Calu3 (cell line): ENCODE measurements at regions of chr1 and their contacts with region 1.

Region 1: GRCh38 chr1:80542231-80542630 is 1258.5 kb upstream of the ADGRL2 start:
- DNase-seq: no peak
- H3K4me3 Mint-ChIP-seq: no peak overlapping the region
- H3K27ac Mint-ChIP-seq: no peak overlapping the region
- H3K4me1 Mint-ChIP-seq: peaks cover 30% of the 10 kb centered on the region
- H3K27me3 Mint-ChIP-seq: no peaks in the 10 kb centered on the region
- CTCF ChIP-seq: no peak

Region 2: GRCh38 chr1:80248886-80249285 is 293.3 kb before region 1 on chr1:
- CTCF ChIA-PET with region 1: no interaction called
- intact Hi-C with region 1: no loop called
- DNase-seq: no peak
- H3K4me3 Mint-ChIP-seq: no peak overlapping the region
- H3K27ac Mint-ChIP-seq: no peak overlapping the region
- H3K4me1 Mint-ChIP-seq: no peaks in the 10 kb centered on the region
- H3K27me3 Mint-ChIP-seq: no peaks in the 10 kb centered on the region
- CTCF ChIP-seq: no peak

Region 3: DNA sequence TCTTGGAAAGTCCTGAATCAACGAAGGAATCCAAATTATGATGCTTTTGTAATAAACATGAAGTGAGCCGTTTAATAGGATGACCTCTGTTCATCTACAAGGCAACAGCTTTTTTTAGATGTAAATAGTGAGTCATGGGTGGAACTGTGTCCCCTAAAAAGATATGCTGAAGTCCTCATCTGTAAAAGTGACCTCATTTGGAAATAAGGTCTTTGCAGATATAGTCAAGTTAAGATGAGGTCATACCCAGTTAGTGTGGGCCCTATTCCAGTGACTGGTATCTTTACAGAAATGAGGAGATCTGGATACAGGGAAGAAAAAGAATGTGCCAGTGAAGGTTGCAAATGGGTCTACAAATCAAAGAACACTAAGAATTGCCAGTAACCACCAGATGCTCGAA is 248.4 kb before region 1 on chr1:
- CTCF ChIA-PET with region 1: no interaction called
- intact Hi-C with region 1: no loop called
- DNase-seq: no peak
- H3K4me3 Mint-ChIP-seq: no peak overlapping the region
- H3K27ac Mint-ChIP-seq: no peak overlapping the region
- H3K4me1 Mint-ChIP-seq: no peaks in the 10 kb centered on the region
- H3K27me3 Mint-ChIP-seq: no peaks in the 10 kb centered on the region
- CTCF ChIP-seq: no peak

Region 4: GRCh38 chr1:80531182-80531581 is 11.0 kb before region 1 on chr1:
- CTCF ChIA-PET with region 1: no interaction called
- intact Hi-C with region 1: no loop called
- DNase-seq: no peak
- H3K4me3 Mint-ChIP-seq: no peak overlapping the region
- H3K27ac Mint-ChIP-seq: no peak overlapping the region
- H3K4me1 Mint-ChIP-seq: peaks cover 32% of the 10 kb centered on the region
- H3K27me3 Mint-ChIP-seq: no peaks in the 10 kb centered on the region
- CTCF ChIP-seq: no peak

Region 5: DNA sequence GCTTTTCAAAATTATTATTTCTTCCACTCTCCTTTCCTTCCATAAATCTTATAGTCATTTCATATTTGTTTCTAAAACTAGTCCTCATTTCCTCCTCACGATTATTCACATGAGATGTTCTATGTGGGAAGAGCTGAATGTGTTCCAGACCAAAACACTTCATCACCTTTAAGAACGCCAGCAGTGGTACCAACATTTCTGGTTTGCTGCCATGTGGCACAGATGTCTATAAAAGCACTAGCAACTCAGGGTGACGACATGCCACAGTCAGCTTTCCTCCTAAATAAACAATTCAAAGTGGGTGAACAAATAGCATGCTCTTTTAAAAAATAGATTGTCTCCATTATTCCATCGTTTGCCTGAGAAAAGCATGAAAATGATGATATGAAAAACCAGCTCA is 40.7 kb after region 1 on chr1:
- CTCF ChIA-PET with region 1: no interaction called
- intact Hi-C with region 1: no loop called
- DNase-seq: no peak
- H3K4me3 Mint-ChIP-seq: no peak overlapping the region
- H3K27ac Mint-ChIP-seq: no peak overlapping the region
- H3K4me1 Mint-ChIP-seq: no peaks in the 10 kb centered on the region
- H3K27me3 Mint-ChIP-seq: no peaks in the 10 kb centered on the region
- CTCF ChIP-seq: no peak

Region 6: DNA sequence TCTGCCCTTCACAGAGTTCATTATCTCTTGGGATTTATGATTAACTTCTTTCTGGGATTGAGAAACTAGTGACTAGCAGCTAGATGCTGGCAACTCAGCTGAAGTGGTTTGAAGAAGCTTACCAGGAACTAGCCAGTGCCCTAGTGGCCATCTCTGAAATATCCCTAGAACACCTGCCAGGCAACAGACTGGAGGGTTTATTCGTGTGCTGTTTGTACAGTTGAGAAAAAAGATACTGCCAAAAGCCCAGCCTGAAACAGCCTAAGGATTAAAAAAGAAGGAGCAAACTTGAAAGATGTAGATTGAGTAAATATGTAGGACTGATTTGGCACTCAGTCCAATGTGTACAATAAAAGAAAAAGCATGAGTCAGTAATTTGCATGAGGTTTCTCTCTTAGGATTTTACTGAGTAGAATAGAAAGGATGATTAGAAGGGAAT is 113.9 kb after region 1 on chr1:
- CTCF ChIA-PET with region 1: no interaction called
- intact Hi-C with region 1: loop called (anchors 5 kb)
- DNase-seq: peak; percentile 49
- H3K4me3 Mint-ChIP-seq: peak overlapping the region; percentile 14
- H3K27ac Mint-ChIP-seq: peak overlapping the region; percentile 24
- H3K4me1 Mint-ChIP-seq: peaks cover 19% of the 10 kb centered on the region
- H3K27me3 Mint-ChIP-seq: no peaks in the 10 kb centered on the region
- CTCF ChIP-seq: peak; percentile 56